AG04449 (cell line): ENCODE measurements at regions of chr3 and their contacts with region 1.

Region 1: DNA sequence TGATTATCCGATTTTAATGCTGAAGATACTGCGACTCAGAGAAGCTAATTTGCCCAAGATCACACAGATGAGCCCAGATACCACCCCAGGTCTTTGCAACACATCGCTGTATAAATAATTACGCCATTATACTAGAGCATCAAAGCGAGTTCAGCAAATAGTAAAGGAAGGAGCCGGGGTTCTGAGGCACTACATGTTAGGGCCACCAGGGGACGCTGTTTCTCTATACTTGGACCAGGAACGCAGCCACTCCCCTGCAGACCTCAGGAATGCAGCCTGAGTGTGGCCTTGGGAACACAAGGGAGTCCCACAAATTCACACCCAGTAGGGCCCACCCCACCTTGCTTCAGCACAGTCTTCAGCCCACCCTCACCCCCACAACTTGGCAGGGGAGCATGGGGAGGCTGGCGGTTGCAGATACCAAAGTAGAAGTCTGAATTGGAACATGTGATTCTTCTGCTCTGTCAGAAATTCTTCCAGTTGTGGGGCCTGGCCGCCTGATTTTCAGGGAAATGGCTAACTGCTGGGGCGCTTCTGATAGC is 57.8 kb upstream of the RYK start:
- DNase-seq: no peak
- H3K4me3 ChIP-seq: peak overlapping the region; percentile 33
- CTCF ChIP-seq: peak; percentile 93

Region 2: DNA sequence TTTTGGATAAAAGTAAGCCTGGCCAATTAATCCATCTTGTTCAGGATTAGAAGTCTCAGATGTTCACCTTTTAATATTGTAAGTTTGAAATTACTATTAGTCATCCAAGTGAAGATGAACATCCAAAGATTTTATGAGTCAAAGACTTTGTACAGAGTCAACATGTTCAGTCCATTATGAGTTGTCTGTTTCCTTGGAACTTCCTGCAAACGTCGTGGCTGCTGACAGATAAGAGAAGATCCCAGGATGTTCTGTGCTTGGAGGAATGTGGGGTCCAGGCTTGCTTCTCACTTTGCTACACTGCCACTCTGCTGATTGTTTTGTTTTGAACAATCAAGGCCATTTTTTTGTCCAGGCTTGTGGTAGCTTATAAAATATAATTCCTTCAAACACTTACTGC is 204.4 kb before region 1 on chr3:
- CTCF ChIA-PET with region 1: no interaction called
- POLR2A ChIA-PET with region 1: no interaction called
- DNase-seq: no peak
- H3K4me3 ChIP-seq: no peak overlapping the region
- CTCF ChIP-seq: no peak

Region 3: DNA sequence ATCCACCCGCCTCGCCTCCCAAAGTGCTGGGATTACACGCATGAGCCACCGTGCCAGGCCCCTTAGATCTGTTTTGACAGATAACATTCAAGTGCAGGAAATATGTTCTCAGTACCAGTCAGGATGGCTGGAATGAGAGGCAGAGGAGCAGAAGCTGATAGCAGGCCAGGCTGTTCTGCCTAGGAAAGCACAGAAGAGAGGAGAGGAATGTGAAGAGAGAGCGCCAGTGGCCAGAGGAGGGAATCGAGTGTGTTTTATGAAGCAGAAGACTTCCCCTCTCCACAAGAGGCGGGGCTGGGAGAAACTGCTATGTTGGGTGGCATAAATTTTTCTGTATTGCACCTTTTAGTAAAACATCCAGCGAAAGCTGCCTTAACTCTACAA is 25.8 kb before region 1 on chr3:
- CTCF ChIA-PET with region 1: no interaction called
- POLR2A ChIA-PET with region 1: no interaction called
- DNase-seq: no peak
- H3K4me3 ChIP-seq: no peak overlapping the region
- CTCF ChIP-seq: no peak

Region 4: DNA sequence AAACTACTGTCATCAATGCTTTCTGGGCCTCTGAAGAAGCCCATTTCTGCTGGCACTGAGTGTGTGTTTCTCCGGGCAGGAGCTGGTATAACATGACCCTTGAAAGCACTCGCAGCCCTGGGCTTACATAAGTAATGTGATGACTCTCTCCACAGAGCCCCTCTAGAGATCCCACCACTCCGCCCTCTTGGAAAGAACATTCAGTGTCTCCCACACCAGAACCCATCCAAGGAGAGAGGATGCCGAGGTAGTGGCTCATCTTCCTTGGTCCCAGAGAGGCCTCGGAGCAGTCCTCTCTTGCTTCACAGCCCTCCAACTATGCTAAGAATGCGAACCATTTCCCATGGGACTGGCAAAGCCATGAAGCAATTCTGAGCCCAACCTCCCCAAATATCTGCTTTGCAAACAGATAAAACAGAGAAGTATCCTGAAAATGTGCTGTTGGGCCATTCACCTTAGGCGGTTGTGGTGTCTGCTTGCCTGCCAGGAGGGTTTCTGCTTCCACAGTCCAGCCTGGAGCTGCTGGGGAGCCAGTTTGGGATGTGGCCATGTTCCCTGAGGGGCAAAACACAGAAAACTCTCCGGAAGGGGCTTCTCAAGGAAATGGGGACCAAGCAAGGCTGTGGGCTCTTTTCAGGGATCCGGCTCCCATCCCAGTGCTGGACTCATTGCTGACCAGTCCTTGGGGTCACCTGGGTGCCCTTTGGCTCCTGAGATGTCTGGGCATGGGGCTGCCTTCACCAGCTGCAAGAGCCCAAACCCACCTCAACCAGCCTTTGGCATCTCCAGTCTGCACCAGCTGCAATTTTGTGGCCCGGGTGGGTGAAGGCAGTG is 18.6 kb after region 1 on chr3:
- CTCF ChIA-PET with region 1: interaction called, 8 read pairs
- POLR2A ChIA-PET with region 1: interaction called, 18 read pairs
- DNase-seq: peak; percentile 99
- H3K4me3 ChIP-seq: peak overlapping the region; percentile 2; the same call in 1 of the 2 replicates
- CTCF ChIP-seq: no peak

Region 5: DNA sequence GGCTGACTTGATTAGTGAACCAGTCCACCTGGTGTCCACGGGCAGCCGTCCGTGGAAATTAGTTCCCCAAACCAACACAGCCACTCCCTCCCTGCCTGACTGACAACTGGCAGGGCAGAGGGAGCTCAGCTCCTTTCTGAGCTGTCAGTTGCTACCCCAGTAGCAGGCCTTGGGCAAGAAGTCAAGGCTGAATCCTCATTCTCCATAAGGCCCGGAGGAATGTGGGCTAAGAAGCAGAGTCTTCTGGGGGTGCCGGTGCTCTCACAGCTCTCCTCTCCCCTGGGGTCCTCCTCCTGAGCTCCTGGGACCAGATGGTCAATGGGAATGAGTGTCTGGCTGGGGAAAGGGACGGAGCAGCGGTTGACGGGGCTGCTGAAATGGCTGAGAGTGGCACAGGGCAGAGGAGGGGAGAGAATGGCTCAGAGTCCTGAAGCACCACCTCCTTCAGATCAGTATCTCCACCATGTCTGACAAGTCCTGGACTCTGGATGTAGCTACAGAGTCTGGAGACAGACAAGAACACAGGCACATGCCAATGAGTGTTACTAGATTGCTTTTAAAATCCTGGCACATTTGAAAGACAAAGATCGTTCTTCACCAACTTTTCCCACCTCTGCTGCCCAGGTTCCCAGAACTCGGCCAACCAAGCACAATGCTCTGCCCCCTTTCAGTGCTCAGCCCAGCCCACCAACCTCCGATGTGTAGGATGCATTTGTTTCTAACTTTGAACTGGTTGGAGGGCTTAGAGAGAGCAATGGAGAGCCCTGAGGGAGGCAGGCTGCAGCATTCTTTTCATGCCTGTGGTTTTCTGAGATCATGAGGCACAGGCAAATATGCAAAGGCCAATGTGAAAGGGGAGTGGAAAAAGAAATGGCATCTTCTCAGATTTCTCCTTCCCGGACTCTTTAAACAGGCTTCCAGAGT is 49.1 kb after region 1 on chr3:
- CTCF ChIA-PET with region 1: interaction called, 65 read pairs
- POLR2A ChIA-PET with region 1: interaction called, 25 read pairs
- DNase-seq: peak; percentile 88
- H3K4me3 ChIP-seq: no peak overlapping the region; the same call in 1 of the 2 replicates
- CTCF ChIP-seq: no peak

Region 6: GRCh38 chr3:134373994-134374790 is 65.8 kb after region 1 on chr3 and contains the start of gene AMOTL2:
- CTCF ChIA-PET with region 1: interaction called, 39 read pairs
- POLR2A ChIA-PET with region 1: interaction called, 38 read pairs
- DNase-seq: peak; percentile 82
- H3K4me3 ChIP-seq: peak within 1 kb of the TSS; percentile 99
- CTCF ChIP-seq: no peak

Region 7: DNA sequence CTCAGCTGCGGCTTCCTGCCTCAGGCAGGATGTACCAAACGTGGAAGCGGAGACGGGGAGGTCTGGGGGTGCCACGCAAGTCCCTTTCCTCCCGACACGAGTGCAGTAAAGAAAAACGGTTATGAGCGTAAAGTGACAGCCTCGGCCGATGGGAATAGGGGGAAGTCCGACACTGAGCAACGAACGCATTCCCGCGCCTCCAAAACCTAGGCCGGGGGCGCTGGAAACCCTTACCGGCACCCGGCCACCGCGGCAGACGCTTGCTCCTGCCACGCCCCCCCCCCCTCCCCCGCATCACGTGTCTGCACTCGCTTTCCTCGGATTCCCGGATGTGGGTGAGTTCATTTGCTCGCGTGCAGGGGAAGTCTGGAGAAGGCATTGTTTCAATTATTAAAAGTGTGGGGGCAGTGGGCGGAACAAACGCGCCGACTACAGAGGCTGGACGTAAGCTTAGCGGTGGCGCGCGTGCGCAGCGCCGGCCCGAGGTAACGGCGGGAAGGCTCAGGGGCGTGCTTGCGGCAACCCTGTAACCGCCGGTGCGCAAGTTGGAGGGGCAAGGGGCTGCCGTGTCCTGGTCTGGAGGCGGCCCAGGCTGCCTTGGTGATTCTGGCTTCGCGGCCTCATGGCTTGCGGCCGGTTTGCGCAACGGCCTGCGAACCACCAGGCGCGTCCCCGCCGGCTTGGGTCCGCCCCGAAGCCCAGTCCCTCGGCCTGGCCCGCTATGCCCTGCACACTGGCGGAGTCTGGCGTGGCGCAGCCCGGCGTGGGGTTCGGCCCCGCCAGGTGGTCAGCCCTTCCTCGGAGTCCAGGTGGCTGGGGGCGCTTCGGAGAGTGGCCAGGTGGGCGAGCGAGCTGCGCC is 177.5 kb after region 1 on chr3 and contains the starts of genes ANAPC13 and CEP63:
- CTCF ChIA-PET with region 1: interaction called, 690 read pairs
- POLR2A ChIA-PET with region 1: interaction called, 4 read pairs
- DNase-seq: peak; percentile 96
- H3K4me3 ChIP-seq: peak within 1 kb of the TSS; percentile 82
- CTCF ChIP-seq: no peak